ENCODE measurements at regions of chr10 and their contacts with region 1.

Region 1: DNA sequence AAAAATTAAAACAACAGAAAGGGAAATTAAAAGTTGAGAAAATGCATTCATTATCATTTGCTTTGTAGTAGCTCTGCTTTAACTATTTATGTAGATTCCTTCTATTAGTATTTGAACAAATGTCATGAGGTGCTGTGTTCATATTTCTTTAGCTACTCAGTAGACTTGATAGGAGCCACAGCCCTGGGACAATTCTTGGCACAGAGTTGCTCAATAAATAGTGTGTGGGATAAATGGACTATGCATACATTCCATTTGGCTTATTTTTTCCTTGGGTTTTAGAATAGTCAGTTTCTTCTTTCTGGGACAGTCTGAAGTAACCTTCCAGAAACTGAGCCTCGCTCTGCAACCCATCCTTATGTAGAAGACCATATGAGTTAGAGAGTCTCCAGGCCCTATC is 13.4 kb downstream of the RPP30 start:
- DNase-seq: peak; percentile 63
- ATAC-seq: peak; percentile 58
- H3K4me3 ChIP-seq: peak overlapping the region; percentile 7; the same call in 1 of the 2 replicates
- H3K27ac ChIP-seq: peak overlapping the region; percentile 71
- H3K4me1 ChIP-seq: peaks cover 50% of the 10 kb centered on the region
- H3K27me3 ChIP-seq: no peaks in the 10 kb centered on the region
- CTCF ChIP-seq: no peak

Region 2: GRCh38 chr10:89916481-89916880 is 968.7 kb before region 1 on chr10:
- CTCF ChIA-PET with region 1: no interaction called
- POLR2A ChIA-PET with region 1: no interaction called
- intact Hi-C with region 1: no loop called
- DNase-seq: peak; percentile 72
- ATAC-seq: peak; percentile 26; the same call in 1 of the 2 replicates
- H3K4me3 ChIP-seq: no peak overlapping the region
- H3K27ac ChIP-seq: peak overlapping the region; percentile 32
- H3K4me1 ChIP-seq: peaks cover 49% of the 10 kb centered on the region
- H3K27me3 ChIP-seq: no peaks in the 10 kb centered on the region
- CTCF ChIP-seq: no peak

Region 3: GRCh38 chr10:90871766-90872647 is 13.2 kb before region 1 on chr10 and contains the start of gene RPP30:
- CTCF ChIA-PET with region 1: interaction called, 10 read pairs
- POLR2A ChIA-PET with region 1: no interaction called
- intact Hi-C with region 1: no loop called
- DNase-seq: peak; percentile 69
- ATAC-seq: peak; percentile 99
- H3K4me3 ChIP-seq: peak within 1 kb of the TSS; percentile 95
- H3K27ac ChIP-seq: peak within 1 kb of the TSS; percentile 14; the same call in 1 of the 2 replicates
- H3K4me1 ChIP-seq: 0 out of 2 replicates have a peak, but pooled peaks cover 6% of the 10 kb centered on the region
- H3K27me3 ChIP-seq: no peaks in the 10 kb centered on the region
- CTCF ChIP-seq: no peak
- total RNA-seq, gene RPP30: 44.3 and 57.8 TPM in 2 replicates

Region 4: GRCh38 chr10:90917238-90917967 is 32.2 kb after region 1 on chr10:
- CTCF ChIA-PET with region 1: no interaction called
- POLR2A ChIA-PET with region 1: no interaction called
- intact Hi-C with region 1: no loop called
- DNase-seq: no peak
- ATAC-seq: no peak
- H3K4me3 ChIP-seq: no peak overlapping the region
- H3K27ac ChIP-seq: no peak overlapping the region
- H3K4me1 ChIP-seq: peaks cover 22% of the 10 kb centered on the region
- H3K27me3 ChIP-seq: no peaks in the 10 kb centered on the region
- CTCF ChIP-seq: no peak

Region 5: GRCh38 chr10:90930070-90930837 is 45.1 kb after region 1 on chr10:
- CTCF ChIA-PET with region 1: no interaction called
- POLR2A ChIA-PET with region 1: no interaction called
- intact Hi-C with region 1: loop called (anchors 2 kb)
- DNase-seq: peak; percentile 84
- ATAC-seq: peak; percentile 97
- H3K4me3 ChIP-seq: peak overlapping the region; percentile 40
- H3K27ac ChIP-seq: peak overlapping the region; percentile 70
- H3K4me1 ChIP-seq: peaks cover 35% of the 10 kb centered on the region
- H3K27me3 ChIP-seq: no peaks in the 10 kb centered on the region
- CTCF ChIP-seq: no peak

Region 6: DNA sequence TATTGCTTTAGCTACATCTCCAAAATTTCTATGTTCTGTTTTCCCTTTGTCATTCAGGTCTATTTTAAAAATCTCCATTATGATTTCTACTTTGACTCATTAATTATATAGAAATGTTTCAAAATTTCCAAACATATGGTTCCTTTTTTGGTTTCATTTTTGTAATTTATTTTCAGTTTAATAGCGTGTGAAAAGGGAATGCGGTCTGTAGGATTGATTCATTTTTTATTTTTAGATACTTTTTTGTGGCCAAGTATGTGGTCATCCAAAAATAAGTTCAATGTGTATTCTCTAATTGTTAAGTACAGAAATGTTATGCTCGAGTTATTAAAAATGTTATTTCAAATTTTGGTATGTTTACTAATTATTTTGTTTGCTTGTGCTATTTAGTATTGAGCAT is 108.2 kb after region 1 on chr10:
- CTCF ChIA-PET with region 1: no interaction called
- POLR2A ChIA-PET with region 1: no interaction called
- intact Hi-C with region 1: no loop called
- DNase-seq: no peak
- ATAC-seq: no peak
- H3K4me3 ChIP-seq: no peak overlapping the region
- H3K27ac ChIP-seq: no peak overlapping the region
- H3K4me1 ChIP-seq: no peaks in the 10 kb centered on the region
- H3K27me3 ChIP-seq: no peaks in the 10 kb centered on the region
- CTCF ChIP-seq: no peak

Region 7: GRCh38 chr10:91088300-91089140 is 203.3 kb after region 1 on chr10:
- CTCF ChIA-PET with region 1: interaction called, 14 read pairs
- POLR2A ChIA-PET with region 1: no interaction called
- intact Hi-C with region 1: loop called (anchors 5 kb)
- DNase-seq: peak; percentile 29
- ATAC-seq: peak; percentile 38
- H3K4me3 ChIP-seq: no peak overlapping the region
- H3K27ac ChIP-seq: no peak overlapping the region
- H3K4me1 ChIP-seq: no peaks in the 10 kb centered on the region
- H3K27me3 ChIP-seq: no peaks in the 10 kb centered on the region; the same call in 1 of the 2 replicates
- CTCF ChIP-seq: peak; percentile 37; the same call in 1 of the 2 replicates

Region 8: GRCh38 chr10:91251430-91252056 is 366.4 kb after region 1 on chr10:
- CTCF ChIA-PET with region 1: no interaction called
- POLR2A ChIA-PET with region 1: no interaction called
- intact Hi-C with region 1: loop called (anchors 1 kb)
- DNase-seq: peak; percentile 65
- ATAC-seq: no peak
- H3K4me3 ChIP-seq: no peak overlapping the region
- H3K27ac ChIP-seq: no peak overlapping the region
- H3K4me1 ChIP-seq: no peaks in the 10 kb centered on the region
- H3K27me3 ChIP-seq: no peaks in the 10 kb centered on the region
- CTCF ChIP-seq: peak; percentile 83